ENCODE measurements at regions of chr22 and their contacts with region 1.

Region 1: GRCh38 chr22:19629720-19630419 is 84.4 kb upstream of the SEPTIN5 start:
- DNase-seq: peak; percentile 63 to 86 (median 77)
- H3K4me3 ChIP-seq: peak overlapping the region in 3 of 59 donors; percentile 5 to 27 (median 15)
- H3K27ac ChIP-seq: peak overlapping the region in 2 of 59 donors; percentile 22 to 37
- H3K27me3 ChIP-seq: peaks cover 0 to 7% (median 0%) of the 10 kb centered on the region in 45 donors
- CTCF ChIP-seq: peak; percentile 53 to 98 (median 90)

Region 2: GRCh38 chr22:19304547-19304946 is 325.3 kb before region 1 on chr22:
- intact Hi-C with region 1: loop called (anchors 5 to 10 kb)
- DNase-seq: no peak
- H3K4me3 ChIP-seq: no peak overlapping the region
- H3K27ac ChIP-seq: no peak overlapping the region
- H3K27me3 ChIP-seq: no peaks in the 10 kb centered on the region
- CTCF ChIP-seq: no peak

Region 3: DNA sequence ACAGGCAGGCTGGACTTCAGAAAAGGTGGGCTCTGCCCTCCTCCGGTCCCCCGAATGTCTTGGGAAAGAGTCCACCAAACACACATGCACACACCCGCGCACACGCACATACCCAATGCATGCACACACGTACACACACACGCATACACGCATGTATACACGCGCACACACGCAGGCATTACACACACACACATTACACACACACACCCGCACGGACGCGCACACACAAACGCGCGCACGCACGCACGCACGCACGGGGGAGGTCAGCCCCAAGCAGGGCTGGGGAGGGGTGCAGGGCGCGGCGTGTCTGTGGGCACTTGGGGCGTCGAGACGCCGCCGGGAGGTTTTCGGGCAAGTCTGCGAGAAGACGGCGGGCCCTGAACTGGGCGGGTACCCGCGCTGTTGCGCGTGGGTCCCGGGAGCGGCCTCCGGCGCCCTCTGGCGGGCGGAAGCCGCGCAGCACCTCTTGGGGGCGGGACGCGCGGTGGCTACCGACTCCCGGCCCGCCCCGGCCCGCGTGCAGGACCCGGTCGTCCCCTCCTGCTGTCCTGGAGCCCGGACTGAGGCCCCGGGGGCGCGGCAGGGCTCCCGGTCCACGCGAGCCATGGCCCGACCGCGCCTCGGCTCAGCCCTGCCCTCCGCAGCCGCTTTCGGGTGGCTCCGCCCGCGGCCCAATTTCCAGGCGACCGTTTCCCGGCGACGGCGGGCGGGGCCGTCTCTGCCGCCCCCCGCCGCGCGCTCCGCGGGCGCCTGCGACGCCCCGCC is 88.0 kb after region 1 on chr22:
- intact Hi-C with region 1: loop called in 1 of 2 experiments (anchors 5 kb)
- DNase-seq: peak in 9 of 10 donors; percentile 52 to 85 (median 65)
- H3K4me3 ChIP-seq: peak overlapping the region; percentile 20 to 77 (median 66)
- H3K27ac ChIP-seq: peak overlapping the region in 42 of 59 donors; percentile 61 to 97 (median 84)
- H3K27me3 ChIP-seq: peaks cover 0 to 5% (median 0%) of the 10 kb centered on the region in 45 donors
- CTCF ChIP-seq: peak; percentile 70 to 99 (median 93)

Measured in dorsolateral prefrontal cortex (tissue), 120 donors.